Transverse colon (tissue), 4 donors: ENCODE measurements at regions of chr6 and their contacts with region 1.

Region 1: DNA sequence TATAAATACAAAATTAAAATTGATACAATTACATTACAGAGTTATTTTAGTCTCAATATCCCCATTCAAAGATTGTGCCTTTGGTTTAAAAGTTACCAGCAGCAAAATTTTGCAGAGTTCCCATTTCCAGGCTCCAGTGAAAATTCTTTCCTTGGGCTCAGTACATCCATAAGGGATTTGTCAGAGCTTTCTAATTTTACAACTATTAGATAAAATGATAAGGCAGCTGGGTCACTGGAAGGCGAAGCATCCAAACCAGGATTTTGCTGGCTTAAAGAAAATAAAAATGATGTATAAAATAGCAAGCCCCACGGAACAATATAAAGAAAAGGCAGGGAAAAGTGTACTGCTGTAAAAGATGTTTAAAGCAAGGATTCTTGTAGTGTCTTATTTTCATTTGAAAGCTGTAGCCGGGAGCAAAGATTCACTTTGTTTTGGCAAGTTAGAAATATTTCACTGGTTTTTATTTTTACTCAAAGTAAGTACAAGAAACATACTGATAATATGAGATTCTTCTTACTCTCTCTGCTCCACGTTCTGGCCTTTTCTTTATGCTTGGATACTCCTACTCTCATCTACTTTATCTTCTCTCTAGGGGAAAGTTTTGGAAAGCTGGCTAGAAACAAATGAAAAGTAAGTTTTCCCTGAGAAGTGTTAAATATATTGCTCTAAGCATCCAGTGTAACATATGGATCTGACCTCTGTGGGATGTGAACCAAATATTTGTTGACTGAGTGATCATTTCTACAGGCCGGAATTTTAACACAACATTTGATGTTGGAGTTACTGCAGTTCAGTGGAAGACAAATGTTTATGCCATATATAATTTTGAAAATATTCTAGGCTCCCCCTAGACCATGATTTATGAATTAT is 488.4 kb downstream of the PHF3 start:
- DNase-seq: no peak
- H3K4me3 ChIP-seq: no peak overlapping the region
- H3K27ac ChIP-seq: no peak overlapping the region
- H3K4me1 ChIP-seq: no peaks in the 10 kb centered on the region
- H3K27me3 ChIP-seq: no peaks in the 10 kb centered on the region
- CTCF ChIP-seq: no peak
- EP300 ChIP-seq: no peak
- POLR2A ChIP-seq: no peak

Region 2: GRCh38 chr6:63750400-63750799 is 373.6 kb before region 1 on chr6:
- in situ Hi-C with region 1: no loop called
- intact Hi-C with region 1: no loop called
- DNase-seq: no peak
- H3K4me3 ChIP-seq: no peak overlapping the region
- H3K27ac ChIP-seq: no peak overlapping the region
- H3K4me1 ChIP-seq: no peaks in the 10 kb centered on the region
- H3K27me3 ChIP-seq: no peaks in the 10 kb centered on the region
- CTCF ChIP-seq: no peak
- EP300 ChIP-seq: no peak
- POLR2A ChIP-seq: no peak

Region 3: GRCh38 chr6:64090352-64090751 is 33.6 kb before region 1 on chr6:
- in situ Hi-C with region 1: no loop called
- intact Hi-C with region 1: no loop called
- DNase-seq: no peak
- H3K4me3 ChIP-seq: no peak overlapping the region
- H3K27ac ChIP-seq: no peak overlapping the region
- H3K4me1 ChIP-seq: peaks cover 0 to 4% (median 0%) of the 10 kb centered on the region in 4 donors
- H3K27me3 ChIP-seq: no peaks in the 10 kb centered on the region
- CTCF ChIP-seq: no peak
- EP300 ChIP-seq: no peak
- POLR2A ChIP-seq: no peak

Region 4: GRCh38 chr6:64143101-64143500 is 19.1 kb after region 1 on chr6:
- in situ Hi-C with region 1: no loop called
- intact Hi-C with region 1: loop called (anchors 2 kb)
- DNase-seq: no peak
- H3K4me3 ChIP-seq: no peak overlapping the region
- H3K27ac ChIP-seq: no peak overlapping the region
- H3K4me1 ChIP-seq: no peaks in the 10 kb centered on the region
- H3K27me3 ChIP-seq: no peaks in the 10 kb centered on the region
- CTCF ChIP-seq: no peak
- EP300 ChIP-seq: no peak
- POLR2A ChIP-seq: no peak